CD4-positive, alpha-beta T cell (primary cell): ENCODE measurements at regions of chr6 and their contacts with region 1.

Region 1: DNA sequence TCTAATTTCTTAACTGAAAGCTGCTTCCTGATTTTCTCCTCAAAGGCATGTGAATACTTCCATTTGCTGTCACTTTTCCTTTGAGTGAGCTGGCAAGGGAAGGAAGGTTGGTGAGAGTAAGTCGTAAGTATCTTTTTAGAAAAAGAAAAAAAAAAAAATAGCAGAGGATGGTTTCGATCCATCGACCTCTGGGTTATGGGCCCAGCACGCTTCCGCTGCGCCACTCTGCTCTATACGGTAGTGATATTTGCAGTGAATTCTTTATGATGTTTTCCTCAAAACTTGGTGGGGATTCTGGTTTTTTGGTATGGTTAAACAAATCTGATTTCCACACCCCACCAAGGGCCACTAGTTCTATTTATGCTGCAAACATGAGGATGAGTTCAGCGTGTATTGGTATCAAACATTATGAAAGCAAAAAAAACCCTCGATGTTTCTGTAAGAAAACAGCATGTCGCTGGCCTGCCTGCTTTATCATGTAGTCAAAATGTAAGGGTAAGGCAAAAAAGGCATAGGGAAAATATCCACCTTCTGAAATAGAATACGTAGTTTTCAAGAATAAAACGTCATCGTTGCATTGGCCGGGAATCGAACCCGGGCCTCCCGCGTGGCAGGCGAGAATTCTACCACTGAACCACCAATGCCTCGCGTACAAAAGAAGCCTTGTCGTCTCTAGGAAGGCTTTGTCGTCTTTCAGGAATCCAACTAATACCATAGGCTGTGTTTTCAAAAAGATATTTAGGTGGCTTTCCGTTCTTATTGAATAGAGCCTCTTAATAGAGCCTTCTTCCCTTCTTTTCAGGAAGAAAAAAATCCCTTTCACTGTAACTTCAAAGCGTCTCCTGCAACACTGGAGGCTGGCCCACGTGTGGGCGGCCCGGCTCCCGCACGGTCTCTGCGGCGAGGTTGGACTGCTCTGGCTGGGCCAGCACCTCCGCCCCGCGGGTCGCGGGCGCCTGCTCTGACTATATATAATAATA is 9.6 kb downstream of the OR2B2 start:
- DNase-seq: peak; percentile 78 to 95 (median 88)
- ATAC-seq: peak; percentile 86
- H3K4me3 ChIP-seq: peak overlapping the region; percentile 60
- H3K4me3 Mint-ChIP-seq: peak overlapping the region; percentile 98
- H3K27ac ChIP-seq: peak overlapping the region; percentile 71 to 72
- H3K27ac Mint-ChIP-seq: peak overlapping the region; percentile 100
- H3K4me1 ChIP-seq: peaks cover 7% of the 10 kb centered on the region
- H3K4me1 Mint-ChIP-seq: peaks cover 16% of the 10 kb centered on the region
- H3K27me3 ChIP-seq: no peaks in the 10 kb centered on the region
- H3K27me3 Mint-ChIP-seq: peaks cover 23% of the 10 kb centered on the region
- CTCF ChIP-seq: no peak

Region 2: DNA sequence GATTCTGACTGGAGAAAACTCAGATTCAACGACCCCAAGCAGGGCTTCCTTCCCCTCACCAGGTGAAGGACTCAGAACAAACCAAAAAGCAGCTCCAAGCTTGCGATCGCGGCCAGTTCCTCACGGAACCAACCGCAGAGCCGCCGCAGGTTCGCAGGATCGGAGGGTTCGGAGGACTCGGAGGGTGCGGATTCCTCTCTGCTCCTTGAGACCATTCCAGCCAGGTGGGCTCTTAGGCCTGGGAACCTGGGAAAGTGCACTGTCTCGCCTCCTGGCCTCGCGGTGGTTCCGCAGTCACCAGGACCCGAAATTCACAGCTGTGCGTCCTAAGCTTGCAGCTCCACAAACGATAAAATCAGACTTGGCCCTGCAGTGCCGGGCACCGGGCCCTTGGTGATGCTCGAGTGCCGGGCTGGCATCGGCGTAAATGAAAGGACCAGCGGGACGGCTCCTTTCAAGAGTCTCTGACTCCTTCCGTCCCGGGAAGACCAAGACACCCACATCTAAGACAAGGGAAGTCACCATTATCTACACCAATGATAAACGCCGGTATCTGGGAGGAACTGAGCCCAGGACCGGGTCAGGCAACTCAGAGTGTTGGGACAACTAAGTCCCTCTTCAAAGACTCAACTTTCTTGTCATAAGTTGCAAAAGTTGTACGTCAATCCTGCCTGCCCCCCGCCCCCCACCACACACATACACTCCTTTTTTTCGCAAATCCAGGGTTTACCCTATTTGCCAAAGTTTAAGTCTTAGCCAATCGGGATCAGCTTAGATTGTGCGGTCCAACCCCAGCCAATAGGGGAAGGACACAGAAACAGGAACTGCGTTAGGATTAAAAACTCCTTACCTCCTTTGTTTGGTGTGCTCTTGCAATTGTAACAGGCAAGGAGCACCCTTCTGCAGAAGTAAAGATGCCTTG is 724.9 kb before region 1 on chr6:
- CTCF ChIA-PET with region 1: no interaction called
- POLR2A ChIA-PET with region 1: interaction called, 4 read pairs
- intact Hi-C with region 1: loop called in 1 of 2 experiments (anchors 5 kb)
- DNase-seq: peak; percentile 44 to 90 (median 64)
- ATAC-seq: peak; percentile 64
- H3K4me3 ChIP-seq: peak overlapping the region; percentile 89
- H3K4me3 Mint-ChIP-seq: peak overlapping the region; percentile 99
- H3K27ac ChIP-seq: peak overlapping the region; percentile 27 to 63
- H3K27ac Mint-ChIP-seq: peak overlapping the region; percentile 100
- H3K4me1 ChIP-seq: peaks cover 21% of the 10 kb centered on the region
- H3K4me1 Mint-ChIP-seq: peaks cover 24% of the 10 kb centered on the region
- H3K27me3 ChIP-seq: no peaks in the 10 kb centered on the region
- H3K27me3 Mint-ChIP-seq: peaks cover 24% of the 10 kb centered on the region
- CTCF ChIP-seq: peak; percentile 54

Region 3: GRCh38 chr6:27352850-27353249 is 549.8 kb before region 1 on chr6:
- CTCF ChIA-PET with region 1: no interaction called
- POLR2A ChIA-PET with region 1: no interaction called
- intact Hi-C with region 1: no loop called
- DNase-seq: no peak
- ATAC-seq: no peak
- H3K4me3 ChIP-seq: no peak overlapping the region
- H3K4me3 Mint-ChIP-seq: no peak overlapping the region
- H3K27ac ChIP-seq: no peak overlapping the region
- H3K27ac Mint-ChIP-seq: no peak overlapping the region
- H3K4me1 ChIP-seq: no peaks in the 10 kb centered on the region
- H3K4me1 Mint-ChIP-seq: no peaks in the 10 kb centered on the region
- H3K27me3 ChIP-seq: peaks cover 0 to 3% of the 10 kb centered on the region in 2 experiments
- H3K27me3 Mint-ChIP-seq: peaks cover 17% of the 10 kb centered on the region
- CTCF ChIP-seq: no peak

Region 4: DNA sequence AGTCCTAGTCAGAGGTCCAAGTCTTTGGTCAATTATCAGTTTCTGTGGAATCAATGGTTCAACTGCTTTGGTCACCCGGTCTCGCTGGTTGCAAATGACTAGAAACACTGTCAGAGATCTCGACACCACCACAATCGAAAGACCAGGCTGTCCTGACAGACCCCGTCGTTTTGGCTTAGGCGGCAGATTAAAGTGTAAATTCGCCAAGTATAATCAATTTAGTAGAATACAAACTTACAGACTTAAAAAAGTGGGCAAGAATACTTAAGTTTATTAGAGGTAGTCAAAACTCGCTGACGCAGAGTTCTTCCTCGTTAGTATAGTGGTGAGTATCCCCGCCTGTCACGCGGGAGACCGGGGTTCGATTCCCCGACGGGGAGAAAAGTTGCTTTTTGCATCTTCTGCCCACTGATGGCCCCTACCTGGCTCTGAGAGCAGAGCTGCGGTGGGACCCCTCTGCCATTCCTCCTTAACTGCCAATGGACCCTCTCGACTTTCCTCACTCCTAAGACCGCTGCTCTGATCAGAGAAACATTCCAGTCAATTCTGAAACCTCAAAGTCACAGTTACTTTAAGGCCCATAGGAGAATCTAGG is 399.1 kb before region 1 on chr6:
- CTCF ChIA-PET with region 1: no interaction called
- POLR2A ChIA-PET with region 1: no interaction called
- intact Hi-C with region 1: loop called in 1 of 2 experiments (anchors 5 kb)
- DNase-seq: peak; percentile 59 to 89 (median 75)
- ATAC-seq: peak; percentile 58
- H3K4me3 ChIP-seq: peak overlapping the region; percentile 62
- H3K4me3 Mint-ChIP-seq: peak overlapping the region; percentile 95
- H3K27ac ChIP-seq: peak overlapping the region; percentile 2 to 33
- H3K27ac Mint-ChIP-seq: peak overlapping the region; percentile 94
- H3K4me1 ChIP-seq: peaks cover 15% of the 10 kb centered on the region
- H3K4me1 Mint-ChIP-seq: peaks cover 46% of the 10 kb centered on the region
- H3K27me3 ChIP-seq: peaks cover 0 to 11% of the 10 kb centered on the region in 2 experiments
- H3K27me3 Mint-ChIP-seq: peaks cover 40% of the 10 kb centered on the region
- CTCF ChIP-seq: no peak

Region 5: GRCh38 chr6:27694545-27694870 is 208.1 kb before region 1 on chr6:
- CTCF ChIA-PET with region 1: no interaction called
- POLR2A ChIA-PET with region 1: no interaction called
- intact Hi-C with region 1: loop called (anchors 5 kb)
- DNase-seq: no peak
- ATAC-seq: peak; percentile 26
- H3K4me3 ChIP-seq: peak overlapping the region; percentile 92
- H3K4me3 Mint-ChIP-seq: peak overlapping the region; percentile 95
- H3K27ac ChIP-seq: no peak overlapping the region
- H3K27ac Mint-ChIP-seq: peak overlapping the region; percentile 78
- H3K4me1 ChIP-seq: peaks cover 18% of the 10 kb centered on the region
- H3K4me1 Mint-ChIP-seq: peaks cover 39% of the 10 kb centered on the region
- H3K27me3 ChIP-seq: no peaks in the 10 kb centered on the region
- H3K27me3 Mint-ChIP-seq: no peaks in the 10 kb centered on the region
- CTCF ChIP-seq: no peak

Region 6: DNA sequence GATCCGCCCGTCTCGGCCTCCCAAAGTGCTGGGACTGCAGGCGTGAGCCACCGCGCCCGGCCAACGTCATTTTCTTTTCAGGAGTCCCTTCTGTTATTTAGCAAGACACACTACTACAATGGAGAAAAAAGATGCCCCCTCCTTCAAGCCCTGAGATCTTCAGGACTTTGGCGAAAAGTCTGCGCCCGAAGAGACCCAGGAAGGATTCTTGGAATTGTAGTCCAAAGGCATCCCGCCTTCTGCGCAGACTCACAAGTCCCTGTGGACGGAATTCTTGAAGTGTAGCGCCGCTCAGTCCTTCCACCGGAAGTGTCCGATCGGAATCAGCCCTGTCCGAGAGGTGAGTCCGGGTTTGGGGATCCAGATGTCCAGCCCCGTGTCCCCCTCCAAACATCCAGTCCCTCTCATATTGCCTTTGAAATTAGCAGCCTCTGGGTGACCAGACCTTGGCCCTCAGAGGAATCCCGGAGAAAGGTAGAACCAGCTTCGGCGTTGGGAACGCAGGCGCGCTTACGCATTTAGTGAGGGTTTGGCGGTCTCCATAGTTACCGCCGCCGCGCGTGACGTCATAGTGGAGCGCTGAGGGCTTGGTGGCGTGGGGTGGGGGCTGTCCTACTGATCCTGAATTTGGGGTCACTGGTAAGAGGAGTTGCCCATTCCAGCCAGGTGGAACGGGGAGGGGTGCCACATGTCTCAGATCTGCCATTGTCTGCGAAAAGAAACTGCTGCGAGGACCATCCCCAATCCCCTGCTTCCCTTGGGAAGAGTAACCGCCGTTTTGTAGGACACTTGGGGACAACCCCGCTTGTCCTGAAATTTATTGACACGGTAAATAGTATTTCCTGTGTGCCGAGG is 178.2 kb after region 1 on chr6:
- CTCF ChIA-PET with region 1: no interaction called
- POLR2A ChIA-PET with region 1: no interaction called
- intact Hi-C with region 1: loop called in 1 of 2 experiments (anchors 10 kb)
- DNase-seq: peak; percentile 81 to 96 (median 90)
- ATAC-seq: peak; percentile 76
- H3K4me3 ChIP-seq: peak overlapping the region; percentile 71
- H3K4me3 Mint-ChIP-seq: peak overlapping the region; percentile 86
- H3K27ac ChIP-seq: peak overlapping the region; percentile 82 to 90
- H3K27ac Mint-ChIP-seq: peak overlapping the region; percentile 88
- H3K4me1 ChIP-seq: peaks cover 16% of the 10 kb centered on the region
- H3K4me1 Mint-ChIP-seq: peaks cover 22% of the 10 kb centered on the region
- H3K27me3 ChIP-seq: no peaks in the 10 kb centered on the region
- H3K27me3 Mint-ChIP-seq: no peaks in the 10 kb centered on the region
- CTCF ChIP-seq: no peak

Region 7: GRCh38 chr6:28838634-28839442 is 936.2 kb after region 1 on chr6:
- CTCF ChIA-PET with region 1: no interaction called
- POLR2A ChIA-PET with region 1: no interaction called
- intact Hi-C with region 1: loop called in 1 of 2 experiments (anchors 10 kb)
- DNase-seq: peak; percentile 58 to 90 (median 74)
- ATAC-seq: peak; percentile 62
- H3K4me3 ChIP-seq: peak overlapping the region; percentile 65
- H3K4me3 Mint-ChIP-seq: peak overlapping the region; percentile 76
- H3K27ac ChIP-seq: peak overlapping the region; percentile 12 to 38
- H3K27ac Mint-ChIP-seq: peak overlapping the region; percentile 96
- H3K4me1 ChIP-seq: peaks cover 14% of the 10 kb centered on the region
- H3K4me1 Mint-ChIP-seq: peaks cover 22% of the 10 kb centered on the region
- H3K27me3 ChIP-seq: peaks cover 3 to 22% of the 10 kb centered on the region in 2 experiments
- H3K27me3 Mint-ChIP-seq: peaks cover 49% of the 10 kb centered on the region
- CTCF ChIP-seq: peak; percentile 77